Prostate gland (tissue), 2 donors: ENCODE measurements at regions of chr6 and their contacts with region 1.

Region 1: GRCh38 chr6:159104163-159104925 is 59.6 kb upstream of the TAGAP start:
- DNase-seq: peak; percentile 32
- H3K4me3 ChIP-seq: no peak overlapping the region
- H3K27ac ChIP-seq: no peak overlapping the region
- H3K4me1 ChIP-seq: no peaks in the 10 kb centered on the region
- H3K27me3 ChIP-seq: no peaks in the 10 kb centered on the region
- CTCF ChIP-seq: peak; percentile 44 to 77 (median 72)
- POLR2A ChIP-seq: no peak

Region 2: DNA sequence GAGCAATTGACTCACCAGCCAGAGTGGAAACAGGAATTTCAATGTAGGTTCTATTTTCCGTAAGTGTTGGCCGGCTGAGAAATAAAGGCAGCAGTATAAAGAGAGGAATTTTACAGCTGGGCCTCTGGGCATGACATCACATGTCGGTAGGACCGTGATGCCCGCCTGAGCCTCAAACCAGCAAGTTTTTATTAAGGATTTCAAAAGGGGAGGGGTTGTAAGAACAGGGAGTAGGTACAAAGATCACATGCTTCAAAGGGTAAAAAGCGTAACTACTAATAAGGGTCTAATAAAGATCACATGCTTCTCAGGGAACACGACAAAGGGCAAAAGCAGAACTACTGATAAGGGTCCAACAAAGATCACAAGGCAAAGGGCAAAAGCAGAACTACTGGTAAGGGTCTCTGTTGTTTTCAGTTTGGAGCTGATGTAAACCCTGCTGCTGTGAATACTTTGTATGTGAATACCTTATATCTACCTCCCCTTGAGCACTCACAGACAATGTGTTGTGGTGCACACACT is 801.1 kb before region 1 on chr6:
- intact Hi-C with region 1: no loop called
- DNase-seq: peak; percentile 12
- H3K4me3 ChIP-seq: no peak overlapping the region
- H3K27ac ChIP-seq: no peak overlapping the region
- H3K4me1 ChIP-seq: no peaks in the 10 kb centered on the region
- H3K27me3 ChIP-seq: no peaks in the 10 kb centered on the region
- CTCF ChIP-seq: no peak
- POLR2A ChIP-seq: no peak

Region 3: GRCh38 chr6:158999666-159000403 is 104.5 kb before region 1 on chr6 and contains the start of gene RSPH3:
- intact Hi-C with region 1: loop called (anchors 10 kb)
- DNase-seq: peak; percentile 96
- H3K4me3 ChIP-seq: peak within 1 kb of the TSS; percentile 59 to 77
- H3K27ac ChIP-seq: peak within 1 kb of the TSS; percentile 81 to 90
- H3K4me1 ChIP-seq: no peaks in the 10 kb centered on the region
- H3K27me3 ChIP-seq: no peaks in the 10 kb centered on the region
- CTCF ChIP-seq: peak in 3 of 4 experiments; percentile 27 to 51 (median 40)
- POLR2A ChIP-seq: peak; percentile 63
- total RNA-seq, gene RSPH3: 18.7 to 19.4 TPM

Region 4: GRCh38 chr6:159042003-159042825 is 62.1 kb before region 1 on chr6:
- intact Hi-C with region 1: loop called (anchors 2 kb)
- DNase-seq: peak; percentile 68
- H3K4me3 ChIP-seq: no peak overlapping the region
- H3K27ac ChIP-seq: no peak overlapping the region
- H3K4me1 ChIP-seq: no peaks in the 10 kb centered on the region
- H3K27me3 ChIP-seq: no peaks in the 10 kb centered on the region
- CTCF ChIP-seq: peak; percentile 69 to 92 (median 85)
- POLR2A ChIP-seq: no peak

Region 5: DNA sequence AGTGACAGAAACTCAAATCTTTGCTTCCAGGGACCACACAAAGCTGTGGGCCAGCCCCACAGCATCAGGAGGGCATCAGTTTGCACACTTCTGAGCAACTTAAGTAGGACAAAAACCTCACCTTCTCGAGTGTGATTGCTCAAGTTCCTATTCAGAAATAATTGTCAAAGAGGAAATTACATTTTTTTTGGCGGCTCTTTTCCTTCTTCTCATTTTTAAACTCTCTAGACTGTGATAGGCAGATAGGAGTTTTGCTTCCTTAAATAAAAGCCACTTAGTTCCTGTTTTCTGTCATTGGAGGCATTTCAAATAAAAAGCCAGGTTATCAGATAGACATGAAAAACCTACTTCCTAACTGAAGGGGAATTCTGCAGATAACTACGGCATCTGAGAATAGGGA is 48.3 kb before region 1 on chr6:
- intact Hi-C with region 1: no loop called
- DNase-seq: no peak
- H3K4me3 ChIP-seq: no peak overlapping the region
- H3K27ac ChIP-seq: no peak overlapping the region
- H3K4me1 ChIP-seq: no peaks in the 10 kb centered on the region
- H3K27me3 ChIP-seq: no peaks in the 10 kb centered on the region
- CTCF ChIP-seq: no peak
- POLR2A ChIP-seq: no peak

Region 6: DNA sequence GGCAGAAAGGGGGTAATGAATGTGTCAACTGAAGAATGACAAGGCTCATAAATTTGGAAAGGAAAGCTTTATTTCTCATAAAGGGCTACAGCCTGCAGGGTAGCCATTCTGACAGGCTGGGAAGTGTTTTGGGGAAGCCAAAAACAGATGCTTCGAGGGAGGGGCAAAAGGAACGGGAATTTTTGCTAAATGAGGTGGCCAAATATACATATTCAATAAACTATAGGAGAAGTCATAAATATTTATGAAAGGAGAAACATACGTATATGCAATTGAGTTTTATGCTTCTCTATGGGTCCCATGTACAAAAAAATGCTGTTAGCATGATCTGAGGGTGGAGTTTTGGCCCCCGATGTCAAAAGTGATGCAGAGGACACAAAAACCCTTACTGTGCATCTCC is 245.6 kb after region 1 on chr6:
- intact Hi-C with region 1: no loop called
- DNase-seq: no peak
- H3K4me3 ChIP-seq: no peak overlapping the region
- H3K27ac ChIP-seq: no peak overlapping the region
- H3K4me1 ChIP-seq: no peaks in the 10 kb centered on the region
- H3K27me3 ChIP-seq: no peaks in the 10 kb centered on the region
- CTCF ChIP-seq: no peak
- POLR2A ChIP-seq: no peak